A549 (cell line): ENCODE measurements at regions of chr11 and their contacts with region 1.

Region 1: GRCh38 chr11:69642913-69643632 is 2.1 kb downstream of the CCND1 start:
- DNase-seq: peak; percentile 55 to 80
- ATAC-seq: peak; percentile 13 to 41; a peak in 4 of 6 replicates
- H3K4me3 ChIP-seq: peak overlapping the region; percentile 91
- H3K27ac ChIP-seq: peak overlapping the region; percentile 95 to 96
- H3K4me1 ChIP-seq: peaks cover 45% of the 10 kb centered on the region
- CTCF ChIP-seq: peak; percentile 90
- EP300 ChIP-seq: no peak
- POLR2A ChIP-seq: no peak
- RAD21 ChIP-seq: peak; percentile 74 to 97

Region 2: DNA sequence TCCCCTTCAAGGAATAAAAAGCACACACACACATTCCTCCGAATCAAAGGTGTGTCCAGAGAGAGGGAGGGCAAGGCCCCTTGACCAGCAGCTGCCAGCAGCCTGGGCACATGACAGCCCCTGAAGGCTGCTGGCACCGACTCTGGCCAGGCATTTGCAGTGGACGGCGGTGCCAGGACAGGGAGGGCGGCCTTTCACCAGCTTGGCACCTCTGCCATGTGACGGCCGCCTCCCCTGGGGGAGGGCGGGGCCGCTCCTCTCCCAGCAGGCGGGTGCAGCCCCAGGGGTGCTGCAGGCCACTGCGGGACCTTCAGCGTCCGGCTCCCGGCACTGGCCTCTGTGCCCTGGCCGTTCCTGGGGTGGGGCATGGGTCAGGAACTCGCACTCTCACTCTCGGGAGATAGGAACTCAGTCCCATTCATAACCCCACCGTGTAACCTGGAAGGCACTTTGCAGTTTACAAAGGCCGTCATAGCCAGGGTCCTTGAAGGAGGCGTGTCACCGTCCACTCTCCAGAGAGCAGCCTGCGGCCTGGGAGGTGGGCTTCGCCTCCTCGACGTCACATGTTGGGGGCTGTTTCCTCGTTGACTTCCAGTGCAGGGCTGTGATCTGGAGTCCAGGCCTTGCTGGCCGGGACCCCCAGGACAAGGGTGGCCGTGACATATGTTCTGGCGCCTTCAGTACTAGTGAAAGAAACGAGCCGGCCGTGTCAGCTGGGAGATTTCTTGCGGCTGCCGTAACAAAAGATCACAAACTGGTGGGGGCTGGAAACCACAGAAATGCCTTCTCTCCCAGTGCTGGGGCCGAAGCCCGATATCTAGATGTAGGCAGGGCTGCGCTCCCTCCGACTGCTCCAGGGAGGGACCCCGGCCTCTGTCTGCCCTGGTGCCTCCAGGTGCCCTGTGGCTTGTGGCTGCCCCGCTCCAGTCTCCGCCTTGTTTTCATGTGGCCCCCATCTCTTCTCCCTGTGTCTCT is 527.2 kb before region 1 on chr11:
- CTCF ChIA-PET with region 1: interaction called, 38 read pairs
- POLR2A ChIA-PET with region 1: no interaction called
- DNase-seq: peak in 1 of 2 experiments; percentile 35
- ATAC-seq: peak; percentile 31 to 34; a peak in 3 of 6 replicates
- H3K4me3 ChIP-seq: no peak overlapping the region
- H3K27ac ChIP-seq: peak overlapping the region; percentile 65 to 74
- H3K4me1 ChIP-seq: peaks cover 17% of the 10 kb centered on the region
- CTCF ChIP-seq: no peak
- EP300 ChIP-seq: no peak
- POLR2A ChIP-seq: no peak
- RAD21 ChIP-seq: no peak

Region 3: DNA sequence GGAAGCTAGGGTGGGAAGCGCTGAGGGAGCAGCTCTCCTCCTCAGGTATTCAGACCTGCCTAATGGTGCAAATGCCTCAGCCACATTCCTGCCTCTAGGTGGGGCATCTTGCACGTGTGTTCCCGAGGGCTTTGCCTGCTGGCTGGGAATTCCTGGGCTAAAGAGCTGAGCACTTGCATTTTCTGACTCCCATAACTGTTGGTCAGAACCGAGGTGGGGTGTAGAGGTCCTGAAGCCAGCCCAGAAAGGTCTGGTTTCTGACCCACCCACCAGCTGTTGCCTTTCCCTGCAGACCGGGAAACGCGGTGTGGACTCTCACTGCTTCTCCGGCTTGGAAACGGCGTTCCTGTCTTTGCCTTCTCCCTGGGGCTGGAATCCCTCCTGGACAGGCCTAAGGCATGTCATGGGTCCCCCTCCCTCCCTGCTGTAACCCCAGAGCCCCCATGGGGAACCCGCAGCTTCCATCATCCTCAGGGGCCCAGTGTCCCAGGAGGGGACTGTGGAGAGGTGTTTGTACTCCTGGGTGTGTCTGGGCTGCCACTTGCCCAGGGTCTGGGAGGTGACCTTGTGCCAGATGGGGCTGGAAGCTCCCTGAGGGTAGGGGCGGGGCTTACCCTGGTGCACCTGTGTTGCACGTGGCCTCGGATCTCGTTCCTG is 511.3 kb before region 1 on chr11:
- CTCF ChIA-PET with region 1: interaction called, 31 read pairs
- POLR2A ChIA-PET with region 1: interaction called, 13 read pairs
- DNase-seq: peak; percentile 68 to 86
- ATAC-seq: peak; percentile 88 to 94
- H3K4me3 ChIP-seq: no peak overlapping the region
- H3K27ac ChIP-seq: peak overlapping the region; percentile 63 to 75
- H3K4me1 ChIP-seq: peaks cover 15% of the 10 kb centered on the region
- CTCF ChIP-seq: peak; percentile 88
- EP300 ChIP-seq: no peak
- POLR2A ChIP-seq: no peak
- RAD21 ChIP-seq: peak; percentile 88 to 90

Region 4: GRCh38 chr11:69287968-69288882 is 354.8 kb before region 1 on chr11:
- CTCF ChIA-PET with region 1: interaction called, 150 read pairs
- POLR2A ChIA-PET with region 1: interaction called, 188 read pairs
- DNase-seq: no peak
- ATAC-seq: no peak
- H3K4me3 ChIP-seq: no peak overlapping the region
- H3K27ac ChIP-seq: no peak overlapping the region
- H3K4me1 ChIP-seq: peaks cover 8% of the 10 kb centered on the region
- CTCF ChIP-seq: no peak
- EP300 ChIP-seq: no peak
- POLR2A ChIP-seq: no peak
- RAD21 ChIP-seq: no peak

Region 5: GRCh38 chr11:69480547-69481392 is 162.3 kb before region 1 on chr11:
- CTCF ChIA-PET with region 1: no interaction called
- POLR2A ChIA-PET with region 1: interaction called, 10 read pairs
- DNase-seq: peak; percentile 35 to 69
- ATAC-seq: peak; percentile 32 to 57
- H3K4me3 ChIP-seq: peak overlapping the region; percentile 21; the same call in 1 of the 3 replicates
- H3K27ac ChIP-seq: peak overlapping the region; percentile 97 to 99
- H3K4me1 ChIP-seq: peaks cover 54% of the 10 kb centered on the region
- CTCF ChIP-seq: no peak
- EP300 ChIP-seq: no peak
- POLR2A ChIP-seq: no peak
- RAD21 ChIP-seq: no peak

Region 6: DNA sequence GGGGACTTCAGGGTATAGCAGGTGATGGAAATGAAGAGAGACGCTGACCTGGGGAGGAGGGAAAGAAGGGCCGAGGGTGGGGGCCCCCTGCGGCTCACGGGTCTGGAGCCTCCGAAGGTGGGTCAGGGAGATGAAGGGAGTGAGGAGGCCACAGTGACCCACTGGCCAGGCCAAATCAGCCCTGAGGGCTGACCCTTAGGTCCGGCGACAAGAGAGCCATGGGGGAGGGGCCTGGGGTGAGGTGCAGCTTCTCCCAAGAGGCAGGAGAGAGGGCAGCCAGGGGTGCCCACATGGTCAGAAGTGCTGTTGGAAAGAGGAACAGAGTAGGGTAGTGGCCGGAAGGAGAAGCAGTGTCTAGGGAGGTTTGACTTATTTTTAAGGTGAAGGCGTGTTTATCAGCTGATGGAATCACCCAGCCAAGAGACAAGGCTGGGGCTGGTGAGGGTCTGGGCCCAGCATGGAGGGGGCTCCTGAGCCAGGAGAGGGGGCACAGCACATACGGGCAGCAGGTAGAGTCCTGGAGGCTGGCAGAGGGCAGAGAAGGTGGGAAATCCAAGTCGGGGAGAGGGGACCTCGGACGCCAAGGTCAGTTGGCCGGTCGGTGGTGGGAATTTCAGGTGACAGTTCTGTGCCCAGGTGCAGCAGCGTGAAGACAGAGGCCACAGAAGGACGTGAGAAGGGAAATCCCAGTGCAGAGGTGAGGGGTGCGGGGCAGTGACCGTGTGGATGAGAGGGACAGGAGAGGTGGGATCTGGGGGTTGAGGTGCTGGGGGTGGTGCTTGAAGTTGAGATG is 112.6 kb before region 1 on chr11:
- CTCF ChIA-PET with region 1: no interaction called
- POLR2A ChIA-PET with region 1: no interaction called
- DNase-seq: no peak
- ATAC-seq: no peak
- H3K4me3 ChIP-seq: no peak overlapping the region
- H3K27ac ChIP-seq: no peak overlapping the region
- H3K4me1 ChIP-seq: no peaks in the 10 kb centered on the region
- CTCF ChIP-seq: no peak
- EP300 ChIP-seq: no peak
- POLR2A ChIP-seq: no peak
- RAD21 ChIP-seq: no peak

Region 7: DNA sequence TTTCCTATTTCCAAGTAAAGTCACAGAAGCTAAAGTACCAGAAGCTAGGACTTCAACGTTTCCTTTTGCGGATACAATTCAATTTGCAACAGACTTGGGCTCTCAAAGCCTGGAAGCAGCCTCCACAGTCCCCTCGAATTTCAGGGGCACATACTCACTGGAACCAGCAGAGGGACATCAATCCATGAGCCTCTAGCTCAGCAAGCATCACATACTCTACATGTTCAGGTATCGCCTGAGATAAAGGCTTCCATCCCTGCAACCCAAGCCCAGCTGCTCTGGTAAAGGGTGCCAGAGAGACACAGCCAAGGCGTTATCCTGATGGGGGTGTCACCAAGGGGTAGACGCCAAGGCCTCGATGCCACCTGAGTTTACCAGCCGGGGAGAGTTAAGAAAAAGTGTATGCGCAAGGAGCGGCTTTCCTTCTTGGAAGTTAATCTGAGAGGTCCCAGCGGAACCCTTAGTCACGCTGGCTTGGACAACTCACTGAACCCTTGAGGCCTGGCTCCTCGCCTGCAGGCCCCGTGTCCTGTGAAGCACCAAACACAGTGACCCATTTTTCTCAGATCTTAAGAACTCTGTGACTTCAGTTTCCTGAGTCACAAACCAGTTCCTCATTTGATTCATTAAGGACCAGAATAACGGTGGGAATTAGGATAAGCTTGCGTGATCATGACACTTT is 19.1 kb after region 1 on chr11:
- CTCF ChIA-PET with region 1: interaction called, 116 read pairs
- POLR2A ChIA-PET with region 1: interaction called, 3 read pairs
- DNase-seq: peak in 1 of 2 experiments; percentile 55
- ATAC-seq: peak; percentile 57 to 67; a peak in 5 of 6 replicates
- H3K4me3 ChIP-seq: no peak overlapping the region
- H3K27ac ChIP-seq: no peak overlapping the region
- H3K4me1 ChIP-seq: no peaks in the 10 kb centered on the region; the same call in 2 of the 3 replicates
- CTCF ChIP-seq: no peak
- EP300 ChIP-seq: no peak
- POLR2A ChIP-seq: no peak
- RAD21 ChIP-seq: peak in 1 of 2 experiments; percentile 34; a peak in 1 of 5 replicates